B cell (primary cell): ENCODE measurements at regions of chr2 and their contacts with region 1.

Region 1: GRCh38 chr2:234288974-234289455 is 207.9 kb downstream of the ARL4C start:
- DNase-seq: peak; percentile 77
- ATAC-seq: no peak
- H3K4me3 ChIP-seq: no peak overlapping the region
- H3K4me3 Mint-ChIP-seq: no peak overlapping the region
- H3K27ac ChIP-seq: no peak overlapping the region
- H3K27ac Mint-ChIP-seq: no peak overlapping the region
- H3K4me1 ChIP-seq: peaks cover 41 to 47% of the 10 kb centered on the region in 2 donors
- H3K4me1 Mint-ChIP-seq: peaks cover 49% of the 10 kb centered on the region
- H3K27me3 ChIP-seq: peaks cover 0 to 58% (median 9%) of the 10 kb centered on the region in 4 experiments
- H3K27me3 Mint-ChIP-seq: peaks cover 26% of the 10 kb centered on the region
- CTCF ChIP-seq: peak; percentile 74

Region 2: DNA sequence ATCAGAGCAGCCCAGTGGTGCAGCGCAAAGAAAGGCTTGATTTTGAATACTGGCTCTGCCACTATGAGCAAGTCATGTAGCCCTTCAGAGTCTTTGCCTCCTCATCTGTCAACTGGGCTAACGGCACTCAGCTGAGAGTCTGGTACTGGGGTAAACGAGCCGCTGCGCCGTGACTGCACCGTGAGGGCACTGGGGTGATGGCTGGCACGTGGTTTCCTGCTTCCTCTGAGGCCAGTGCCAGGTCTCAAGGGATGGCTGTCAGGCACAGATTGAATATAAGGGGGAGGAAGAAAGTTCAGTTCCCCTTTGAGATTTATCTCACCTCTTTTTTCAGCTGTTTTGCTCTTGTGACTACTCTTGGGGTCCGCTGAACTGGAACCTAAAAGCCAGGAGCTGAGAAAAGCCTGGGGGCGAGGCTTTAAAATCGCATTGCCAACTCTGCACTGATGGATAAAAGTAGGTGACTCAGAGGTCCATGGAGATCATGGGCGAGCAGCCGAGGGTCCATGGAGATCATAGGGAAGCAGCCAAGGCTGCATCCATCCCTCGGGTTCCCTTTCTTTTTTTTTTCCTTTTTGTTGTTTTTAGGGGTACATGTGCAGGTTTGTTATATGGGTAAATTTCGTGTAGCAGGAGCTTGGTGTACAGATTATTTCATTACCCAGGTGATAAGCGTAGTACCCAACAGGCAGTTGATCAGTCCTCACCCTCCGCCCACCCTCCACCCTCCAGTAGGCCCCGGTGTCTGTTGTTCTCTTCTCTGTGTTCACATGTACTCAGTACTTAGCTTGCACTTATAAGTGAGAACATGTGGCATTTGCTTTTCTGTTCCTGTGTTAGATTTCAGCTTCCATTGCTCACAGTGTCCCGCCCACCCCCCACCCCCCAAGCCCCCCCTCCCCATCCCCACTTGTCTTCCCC is 124.3 kb before region 1 on chr2:
- CTCF ChIA-PET with region 1: interaction called, 3 read pairs
- POLR2A ChIA-PET with region 1: no interaction called
- intact Hi-C with region 1: loop called (anchors 5 kb)
- DNase-seq: peak; percentile 94
- ATAC-seq: peak; percentile 96
- H3K4me3 ChIP-seq: peak overlapping the region in 2 of 5 experiments; percentile 11 to 40
- H3K4me3 Mint-ChIP-seq: peak overlapping the region; percentile 71
- H3K27ac ChIP-seq: peak overlapping the region; percentile 87 to 88
- H3K27ac Mint-ChIP-seq: peak overlapping the region; percentile 89
- H3K4me1 ChIP-seq: peaks cover 45 to 54% of the 10 kb centered on the region in 2 donors
- H3K4me1 Mint-ChIP-seq: peaks cover 55% of the 10 kb centered on the region
- H3K27me3 ChIP-seq: peaks cover 0 to 8% (median 2%) of the 10 kb centered on the region in 4 experiments
- H3K27me3 Mint-ChIP-seq: peaks cover 9% of the 10 kb centered on the region
- CTCF ChIP-seq: no peak

Region 3: DNA sequence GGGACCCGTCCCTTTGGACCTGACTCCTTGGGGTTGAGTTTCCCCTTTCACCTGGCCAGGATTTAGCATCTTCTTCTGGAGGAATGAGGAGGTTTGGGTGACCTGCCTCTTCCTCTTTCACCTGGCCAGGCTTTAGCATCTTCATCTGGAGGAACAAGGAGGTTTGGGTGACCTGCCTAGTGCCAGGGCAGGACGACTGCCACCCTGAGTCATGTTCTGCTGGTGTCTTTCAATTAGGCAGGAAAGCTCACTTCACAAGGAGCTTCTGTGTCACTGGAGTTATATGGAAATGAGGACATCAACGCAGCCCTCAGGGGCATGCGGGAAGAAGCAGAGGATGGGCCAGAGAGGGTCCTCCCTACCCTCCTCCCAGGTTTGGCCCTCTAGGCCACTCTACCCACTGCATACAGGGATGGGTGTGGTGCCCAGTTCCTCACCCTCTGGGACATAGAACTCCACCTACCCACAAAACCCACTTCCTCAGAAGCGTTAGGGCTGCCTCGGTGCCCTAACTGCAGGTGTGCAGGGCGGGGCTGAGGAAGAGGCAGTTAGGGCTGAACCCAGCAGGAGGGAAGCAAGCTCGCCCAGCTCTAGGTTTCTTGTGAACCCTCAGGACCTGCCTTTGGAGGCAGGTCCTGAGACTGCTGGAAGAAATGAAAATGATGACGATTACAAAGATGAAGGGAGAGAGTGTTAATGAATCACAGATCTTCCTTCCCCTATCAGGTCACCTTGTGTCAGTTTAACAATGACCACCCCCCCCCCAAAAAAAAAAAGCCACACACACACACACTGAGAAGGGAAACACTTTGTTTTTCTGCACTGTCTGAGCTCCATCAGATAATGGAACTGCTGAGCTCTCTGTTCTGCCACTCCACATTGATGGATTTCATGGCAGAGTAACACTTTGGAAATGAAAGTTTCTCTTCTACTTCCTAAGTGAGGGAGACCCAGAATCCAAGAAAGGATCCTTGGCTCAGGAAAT is 136.9 kb after region 1 on chr2:
- CTCF ChIA-PET with region 1: interaction called, 4 read pairs
- POLR2A ChIA-PET with region 1: interaction called, 9 read pairs
- intact Hi-C with region 1: loop called (anchors 1 kb)
- DNase-seq: peak; percentile 94
- ATAC-seq: peak; percentile 92
- H3K4me3 ChIP-seq: peak overlapping the region in 2 of 5 experiments; percentile 5 to 37
- H3K4me3 Mint-ChIP-seq: peak overlapping the region; percentile 69
- H3K27ac ChIP-seq: peak overlapping the region; percentile 87
- H3K27ac Mint-ChIP-seq: peak overlapping the region; percentile 95
- H3K4me1 ChIP-seq: peaks cover 79 to 85% of the 10 kb centered on the region in 2 donors
- H3K4me1 Mint-ChIP-seq: peaks cover 73% of the 10 kb centered on the region
- H3K27me3 ChIP-seq: no peaks in the 10 kb centered on the region
- H3K27me3 Mint-ChIP-seq: no peaks in the 10 kb centered on the region
- CTCF ChIP-seq: no peak

Region 4: GRCh38 chr2:234483568-234484251 is 194.7 kb after region 1 on chr2:
- CTCF ChIA-PET with region 1: interaction called, 12 read pairs
- POLR2A ChIA-PET with region 1: no interaction called
- intact Hi-C with region 1: no loop called
- DNase-seq: peak; percentile 90
- ATAC-seq: peak; percentile 87
- H3K4me3 ChIP-seq: peak overlapping the region in 1 of 5 experiments; percentile 27
- H3K4me3 Mint-ChIP-seq: peak overlapping the region; percentile 61
- H3K27ac ChIP-seq: peak overlapping the region; percentile 48 to 59
- H3K27ac Mint-ChIP-seq: peak overlapping the region; percentile 33
- H3K4me1 ChIP-seq: peaks cover 45 to 50% of the 10 kb centered on the region in 2 donors
- H3K4me1 Mint-ChIP-seq: peaks cover 41% of the 10 kb centered on the region
- H3K27me3 ChIP-seq: peaks cover 0 to 4% (median 0%) of the 10 kb centered on the region in 4 experiments
- H3K27me3 Mint-ChIP-seq: no peaks in the 10 kb centered on the region
- CTCF ChIP-seq: peak; percentile 71